Stomach (tissue), 19 donors: ENCODE measurements at regions of chr6 and their contacts with region 1.

Region 1: GRCh38 chr6:166775180-166776081 is 148.4 kb upstream of the RPS6KA2 start:
- DNase-seq: peak; percentile 65 to 91
- H3K4me3 ChIP-seq: no peak overlapping the region
- H3K27ac ChIP-seq: no peak overlapping the region
- H3K4me1 ChIP-seq: peaks cover 0 to 7% (median 2%) of the 10 kb centered on the region in 4 donors
- H3K27me3 ChIP-seq: peaks cover 0 to 9% (median 0%) of the 10 kb centered on the region in 3 donors
- CTCF ChIP-seq: peak in 5 of 7 experiments; percentile 69 to 90 (median 79)
- EP300 ChIP-seq: no peak
- POLR2A ChIP-seq: no peak

Region 2: DNA sequence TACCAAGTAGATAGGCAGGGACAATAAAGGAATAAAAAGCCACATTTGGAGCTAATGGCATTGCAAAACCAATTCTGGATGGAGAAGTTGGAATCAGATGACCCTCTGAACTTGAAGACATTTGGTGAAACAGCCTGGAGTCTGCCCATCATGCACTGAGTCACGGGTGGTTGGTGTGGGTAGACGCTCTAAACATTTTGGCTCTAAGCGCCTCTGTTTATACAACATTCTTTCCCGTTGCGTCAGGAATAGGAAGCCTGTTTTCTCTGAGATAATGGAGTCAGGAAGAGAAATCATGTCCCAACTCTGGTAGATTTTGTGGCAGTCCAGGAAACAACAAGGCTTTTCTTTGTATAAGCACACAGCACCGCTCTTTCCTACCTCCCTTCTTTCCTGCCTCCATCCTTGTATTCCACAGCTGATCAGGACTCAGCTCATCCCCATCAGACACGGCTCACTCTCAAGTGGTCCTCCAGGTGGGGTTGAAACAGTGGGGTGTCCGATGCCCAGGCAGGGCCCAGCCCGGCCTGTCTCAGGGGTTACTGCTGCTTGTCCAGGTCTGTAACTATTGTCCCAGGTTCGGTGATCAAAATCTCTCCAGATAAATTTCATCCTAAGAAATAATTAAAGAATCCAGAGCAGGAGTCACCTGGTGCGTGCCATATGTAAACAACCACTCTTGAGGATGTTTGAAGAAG is 176.8 kb before region 1 on chr6:
- intact Hi-C with region 1: no loop called
- DNase-seq: peak in 1 of 2 donors; percentile 54
- H3K4me3 ChIP-seq: no peak overlapping the region
- H3K27ac ChIP-seq: peak overlapping the region; percentile 27 to 80 (median 76)
- H3K4me1 ChIP-seq: peaks cover 13 to 43% (median 25%) of the 10 kb centered on the region in 4 donors
- H3K27me3 ChIP-seq: no peaks in the 10 kb centered on the region
- CTCF ChIP-seq: no peak
- EP300 ChIP-seq: no peak
- POLR2A ChIP-seq: no peak

Region 3: GRCh38 chr6:167141667-167142432 is 366.4 kb after region 1 on chr6:
- intact Hi-C with region 1: loop called (anchors 10 kb)
- DNase-seq: peak; percentile 65 to 85
- H3K4me3 ChIP-seq: no peak overlapping the region
- H3K27ac ChIP-seq: no peak overlapping the region
- H3K4me1 ChIP-seq: peaks cover 0 to 8% (median 3%) of the 10 kb centered on the region in 4 donors
- H3K27me3 ChIP-seq: peaks cover 0 to 39% (median 0%) of the 10 kb centered on the region in 3 donors
- CTCF ChIP-seq: peak in 5 of 7 experiments; percentile 43 to 73 (median 61)
- EP300 ChIP-seq: no peak
- POLR2A ChIP-seq: no peak

Region 4: GRCh38 chr6:167907837-167908681 is 1132.6 kb after region 1 on chr6:
- intact Hi-C with region 1: no loop called
- DNase-seq: peak in 1 of 2 donors; percentile 58
- H3K4me3 ChIP-seq: peak overlapping the region in 1 of 4 donors; percentile 14
- H3K27ac ChIP-seq: peak overlapping the region in 2 of 5 donors; percentile 71 to 82
- H3K4me1 ChIP-seq: peaks cover 0 to 32% (median 9%) of the 10 kb centered on the region in 4 donors
- H3K27me3 ChIP-seq: no peaks in the 10 kb centered on the region
- CTCF ChIP-seq: peak in 4 of 7 experiments; percentile 8 to 49 (median 24)
- EP300 ChIP-seq: no peak
- POLR2A ChIP-seq: no peak